KBM-7 (cell line): ENCODE measurements at regions of chrX and their contacts with region 1.

Region 1: GRCh38 chrX:14015294-14015693 is 14.4 kb downstream of the GEMIN8 start:
- DNase-seq: no peak

Region 2: DNA sequence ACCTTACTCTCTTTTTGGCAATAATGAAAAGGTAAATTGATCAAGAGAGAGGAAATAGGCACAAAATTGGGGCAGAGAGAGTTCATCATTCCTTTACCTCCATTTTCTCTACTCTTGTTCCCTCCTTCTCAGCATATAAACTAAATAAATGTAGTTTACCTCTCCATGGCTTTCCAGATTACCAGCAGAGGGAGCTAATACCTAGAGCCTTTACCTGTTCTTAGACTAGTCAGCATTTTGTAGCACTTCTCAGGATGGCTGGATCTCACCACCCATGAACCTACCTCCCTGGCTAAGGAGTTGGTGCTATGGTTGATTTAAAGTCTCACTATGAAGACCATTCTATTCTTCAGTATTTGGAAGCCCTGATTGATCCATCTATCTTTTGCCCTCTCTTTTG is 265.1 kb before region 1 on chrX:
- in situ Hi-C with region 1: loop called (anchors 25 kb)
- DNase-seq: peak; percentile 78

Region 3: GRCh38 chrX:14084466-14084865 is 69.2 kb after region 1 on chrX:
- in situ Hi-C with region 1: no loop called
- DNase-seq: no peak